HAP-1 (cell line): ENCODE measurements at regions of chr10 and their contacts with region 1.

Region 1: GRCh38 chr10:987870-988666 is at the start of gene GTPBP4:
- DNase-seq: peak; percentile 93 to 98
- H3K4me3 ChIP-seq: peak within 1 kb of the TSS; percentile 99
- H3K4me1 ChIP-seq: peaks cover 10% of the 10 kb centered on the region; the same call in 1 of the 2 replicates
- H3K27me3 ChIP-seq: no peaks in the 10 kb centered on the region

Region 2: DNA sequence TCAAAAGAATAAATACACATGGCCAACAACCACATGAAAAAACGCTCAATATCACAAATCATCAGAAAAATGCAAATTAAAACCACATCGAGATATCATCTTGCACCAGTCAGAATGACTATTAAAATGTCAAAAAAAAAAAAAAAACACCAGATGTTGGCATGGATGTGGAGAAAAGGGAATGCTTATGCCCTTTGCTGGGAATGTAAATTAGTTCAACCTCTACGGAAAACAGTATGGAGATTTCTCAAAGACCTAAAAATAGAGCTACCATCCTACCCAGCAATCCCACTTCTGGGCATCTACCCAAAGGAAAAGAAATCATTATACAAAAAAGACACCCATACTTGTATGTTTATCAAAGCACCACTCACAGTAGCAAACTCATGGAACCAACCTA is 253.6 kb before region 1 on chr10:
- in situ Hi-C with region 1: no loop called
- DNase-seq: no peak
- H3K4me3 ChIP-seq: no peak overlapping the region
- H3K4me1 ChIP-seq: no peaks in the 10 kb centered on the region
- H3K27me3 ChIP-seq: no peaks in the 10 kb centered on the region

Region 3: GRCh38 chr10:931416-932318 is 56.4 kb before region 1 on chr10 and contains the start of gene LARP4B:
- in situ Hi-C with region 1: loop called (anchors 5 kb)
- DNase-seq: peak; percentile 92 to 96
- H3K4me3 ChIP-seq: peak within 1 kb of the TSS; percentile 55
- H3K4me1 ChIP-seq: peaks cover 23% of the 10 kb centered on the region
- H3K27me3 ChIP-seq: no peaks in the 10 kb centered on the region